Panc1 (cell line): ENCODE measurements at regions of chr6 and their contacts with region 1.

Region 1: GRCh38 chr6:137804637-137805036 is 62.4 kb upstream of the TNFAIP3 start:
- DNase-seq: no peak
- ATAC-seq: no peak
- H3K4me3 ChIP-seq: no peak overlapping the region
- H3K27ac ChIP-seq: no peak overlapping the region
- H3K4me1 ChIP-seq: no peaks in the 10 kb centered on the region
- H3K27me3 ChIP-seq: no peaks in the 10 kb centered on the region
- CTCF ChIP-seq: no peak

Region 2: DNA sequence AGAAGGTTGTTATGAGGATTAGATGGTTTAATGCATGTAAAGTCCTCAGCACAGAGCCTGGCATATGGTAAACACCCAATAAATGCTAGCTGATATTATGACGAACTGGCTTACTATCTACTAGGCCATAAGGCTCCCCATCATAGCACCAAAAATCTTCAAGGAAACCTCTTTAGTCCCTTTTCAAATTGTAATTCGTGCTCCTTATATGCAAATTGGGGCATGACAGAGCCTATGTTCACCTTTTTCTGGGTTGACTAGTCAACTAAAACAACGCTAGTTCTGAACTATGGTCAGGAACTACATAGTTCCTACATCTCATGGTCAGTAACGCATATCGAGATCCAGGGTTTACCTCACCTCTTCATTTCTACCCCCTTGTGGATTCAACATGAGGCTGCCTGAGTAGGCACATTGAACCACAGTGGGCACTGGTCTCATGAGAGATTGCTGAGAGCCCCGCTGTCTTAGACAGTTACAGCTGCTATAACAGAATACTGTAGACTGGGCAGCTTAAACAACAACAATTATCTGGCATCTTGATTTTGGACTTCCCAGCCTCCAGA is 34.8 kb before region 1 on chr6:
- CTCF ChIA-PET with region 1: no interaction called
- POLR2A ChIA-PET with region 1: no interaction called
- in situ Hi-C with region 1: no loop called
- intact Hi-C with region 1: loop called (anchors 1 kb)
- DNase-seq: no peak
- ATAC-seq: no peak
- H3K4me3 ChIP-seq: no peak overlapping the region
- H3K27ac ChIP-seq: no peak overlapping the region
- H3K4me1 ChIP-seq: no peaks in the 10 kb centered on the region
- H3K27me3 ChIP-seq: no peaks in the 10 kb centered on the region
- CTCF ChIP-seq: no peak